ENCODE measurements at regions of chr11 and their contacts with region 1.

Region 1: DNA sequence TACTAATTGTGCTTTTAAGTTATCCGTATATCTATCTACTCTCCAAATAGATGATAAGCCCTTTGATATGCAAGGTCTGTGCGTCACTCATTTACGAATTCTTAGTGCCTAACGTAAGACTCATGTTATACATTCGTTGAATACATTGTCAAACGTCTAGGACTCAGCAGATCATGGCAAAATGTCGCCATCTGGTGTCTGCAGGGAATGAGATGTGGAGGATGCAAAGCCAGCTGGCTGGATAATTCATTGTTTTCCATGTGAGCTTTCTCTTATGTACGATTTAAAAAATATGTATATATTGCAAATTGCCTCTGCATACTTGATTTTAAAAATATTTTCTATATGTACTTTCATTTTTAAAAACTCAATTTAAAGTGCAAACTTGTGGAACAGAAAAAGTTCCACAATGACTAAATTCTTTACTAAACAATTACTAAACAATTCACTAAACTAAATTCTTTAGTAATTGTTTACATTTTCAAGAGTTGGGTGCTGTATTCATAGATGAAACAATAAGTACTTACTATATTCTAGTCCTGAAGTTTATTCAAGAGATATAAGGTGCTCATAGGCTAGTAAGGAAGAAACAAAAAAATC is 33.8 kb downstream of the ZNF202 start:
- DNase-seq: peak; percentile 70
- H3K4me3 Mint-ChIP-seq: no peak overlapping the region
- H3K27ac Mint-ChIP-seq: no peak overlapping the region
- H3K4me1 Mint-ChIP-seq: no peaks in the 10 kb centered on the region
- H3K27me3 Mint-ChIP-seq: peaks cover 4% of the 10 kb centered on the region

Region 2: DNA sequence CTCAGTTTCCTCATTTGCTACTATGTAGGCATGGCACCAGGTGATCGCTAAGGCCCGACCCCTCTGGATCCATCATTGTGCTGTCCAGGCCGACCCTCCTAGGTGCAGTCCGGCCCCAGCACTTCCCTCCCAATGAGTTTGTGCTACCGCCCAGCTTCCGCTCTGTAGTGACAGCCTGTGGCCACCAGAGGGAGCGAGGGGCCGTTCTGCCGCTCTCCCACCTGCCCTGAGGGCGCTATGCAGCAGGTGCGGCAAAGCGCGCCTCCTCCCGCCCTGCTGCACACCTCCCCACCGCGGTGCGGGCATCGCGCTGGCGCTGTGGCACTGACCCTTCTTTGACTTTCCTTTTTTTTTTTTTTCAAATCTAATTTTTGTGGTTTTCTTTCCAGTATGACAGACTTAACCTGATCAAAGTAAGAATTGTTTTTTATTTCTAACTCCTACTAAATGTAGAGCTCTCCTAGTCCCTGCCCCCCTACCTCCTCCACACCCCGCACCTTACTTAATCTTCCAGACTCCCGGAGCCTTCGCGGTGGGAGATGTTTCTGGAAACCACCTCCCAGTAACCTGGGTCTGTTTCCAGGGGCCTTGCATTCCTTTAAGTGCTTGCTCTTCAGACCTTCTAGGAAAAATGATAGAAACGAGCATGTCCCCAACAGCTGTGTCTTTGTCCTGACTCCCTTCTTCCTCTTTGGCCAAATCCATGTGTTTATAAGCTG is 127.0 kb before region 1 on chr11:
- CTCF ChIA-PET with region 1: interaction called, 20 read pairs
- POLR2A ChIA-PET with region 1: no interaction called
- intact Hi-C with region 1: loop called (anchors 1 kb)
- DNase-seq: peak; percentile 79
- H3K4me3 Mint-ChIP-seq: no peak overlapping the region
- H3K27ac Mint-ChIP-seq: no peak overlapping the region
- H3K4me1 Mint-ChIP-seq: peaks cover 12% of the 10 kb centered on the region
- H3K27me3 Mint-ChIP-seq: no peaks in the 10 kb centered on the region

Region 3: GRCh38 chr11:123640677-123641494 is 66.8 kb before region 1 on chr11:
- CTCF ChIA-PET with region 1: interaction called, 163 read pairs
- POLR2A ChIA-PET with region 1: no interaction called
- intact Hi-C with region 1: loop called (anchors 1 kb)
- DNase-seq: peak; percentile 66
- H3K4me3 Mint-ChIP-seq: no peak overlapping the region
- H3K27ac Mint-ChIP-seq: no peak overlapping the region
- H3K4me1 Mint-ChIP-seq: no peaks in the 10 kb centered on the region
- H3K27me3 Mint-ChIP-seq: peaks cover 17% of the 10 kb centered on the region

Region 4: DNA sequence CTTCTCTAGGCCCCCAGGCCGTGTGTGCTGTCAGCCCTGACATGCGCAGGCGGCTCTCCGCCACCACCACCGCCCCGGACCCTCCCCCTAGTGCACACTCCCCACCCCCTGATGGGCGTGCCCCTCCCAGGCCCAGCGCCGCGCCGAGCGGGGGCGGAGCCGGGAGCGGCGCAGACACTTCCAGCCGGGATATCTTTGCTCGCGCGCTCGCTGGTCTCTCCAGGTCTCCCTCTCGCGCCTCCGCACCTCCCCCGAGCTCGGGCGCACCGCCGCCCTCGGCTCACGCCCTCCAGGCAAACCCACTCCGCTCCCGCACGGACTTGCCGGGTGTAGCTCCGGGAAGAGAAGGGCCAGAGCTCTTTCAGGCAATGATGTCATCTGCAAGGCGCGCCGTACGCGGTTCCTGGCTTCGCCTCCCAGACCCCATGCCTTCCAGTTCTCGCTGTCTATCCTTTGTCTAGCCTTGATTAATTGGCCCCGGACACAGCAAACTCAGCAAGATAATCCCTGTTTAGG is 53.1 kb before region 1 on chr11 and contains the start of gene SCN3B:
- CTCF ChIA-PET with region 1: interaction called, 13 read pairs
- POLR2A ChIA-PET with region 1: no interaction called
- intact Hi-C with region 1: no loop called
- DNase-seq: peak; percentile 15
- H3K4me3 Mint-ChIP-seq: peak within 1 kb of the TSS; percentile 44
- H3K27ac Mint-ChIP-seq: no peak within 1 kb of the TSS
- H3K4me1 Mint-ChIP-seq: peaks cover 12% of the 10 kb centered on the region
- H3K27me3 Mint-ChIP-seq: peaks cover 35% of the 10 kb centered on the region
- total RNA-seq, gene SCN3B: not detected

Region 5: DNA sequence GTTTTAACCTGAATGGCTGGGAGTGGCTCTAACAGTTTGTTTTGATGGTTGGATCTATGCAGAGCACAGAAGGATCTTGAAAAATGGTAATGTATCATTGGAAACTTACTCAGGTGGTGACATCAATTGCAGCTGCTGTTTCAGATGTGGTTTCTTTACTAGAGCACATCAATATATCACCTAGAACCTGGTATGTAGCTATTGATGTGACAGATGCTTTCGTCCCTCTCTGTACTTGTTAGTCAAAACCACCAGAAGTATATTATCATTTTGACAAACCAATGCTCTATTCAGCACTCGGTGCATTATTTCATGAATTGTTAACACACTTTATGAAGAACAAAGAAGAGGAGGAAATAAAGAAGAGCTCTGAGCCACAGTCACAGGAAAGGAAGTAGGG is 26.7 kb before region 1 on chr11:
- CTCF ChIA-PET with region 1: interaction called, 10 read pairs
- POLR2A ChIA-PET with region 1: no interaction called
- intact Hi-C with region 1: no loop called
- DNase-seq: no peak
- H3K4me3 Mint-ChIP-seq: no peak overlapping the region
- H3K27ac Mint-ChIP-seq: peak overlapping the region; percentile 10
- H3K4me1 Mint-ChIP-seq: peaks cover 6% of the 10 kb centered on the region
- H3K27me3 Mint-ChIP-seq: peaks cover 6% of the 10 kb centered on the region

Region 6: DNA sequence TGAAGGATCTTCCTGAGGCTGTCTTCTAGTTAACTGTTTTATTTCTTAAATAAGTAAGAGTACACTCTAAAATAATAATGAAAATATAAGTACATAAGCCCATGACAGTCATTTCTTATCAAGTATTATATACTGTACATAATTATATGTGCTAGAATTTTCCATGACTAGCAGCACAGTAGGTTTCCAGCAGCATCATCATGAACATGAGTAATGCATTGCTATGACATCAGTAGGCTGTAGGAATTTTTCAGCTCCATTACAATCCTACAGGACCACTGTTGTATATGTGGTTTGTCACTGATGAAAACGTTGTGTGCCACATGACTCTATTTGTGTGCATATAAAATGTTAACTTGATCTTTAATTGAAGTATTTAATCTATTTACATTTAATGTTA is 11.7 kb after region 1 on chr11:
- CTCF ChIA-PET with region 1: interaction called, 28 read pairs
- POLR2A ChIA-PET with region 1: no interaction called
- intact Hi-C with region 1: no loop called
- DNase-seq: no peak
- H3K4me3 Mint-ChIP-seq: no peak overlapping the region
- H3K27ac Mint-ChIP-seq: no peak overlapping the region
- H3K4me1 Mint-ChIP-seq: peaks cover 6% of the 10 kb centered on the region
- H3K27me3 Mint-ChIP-seq: peaks cover 13% of the 10 kb centered on the region

Region 7: DNA sequence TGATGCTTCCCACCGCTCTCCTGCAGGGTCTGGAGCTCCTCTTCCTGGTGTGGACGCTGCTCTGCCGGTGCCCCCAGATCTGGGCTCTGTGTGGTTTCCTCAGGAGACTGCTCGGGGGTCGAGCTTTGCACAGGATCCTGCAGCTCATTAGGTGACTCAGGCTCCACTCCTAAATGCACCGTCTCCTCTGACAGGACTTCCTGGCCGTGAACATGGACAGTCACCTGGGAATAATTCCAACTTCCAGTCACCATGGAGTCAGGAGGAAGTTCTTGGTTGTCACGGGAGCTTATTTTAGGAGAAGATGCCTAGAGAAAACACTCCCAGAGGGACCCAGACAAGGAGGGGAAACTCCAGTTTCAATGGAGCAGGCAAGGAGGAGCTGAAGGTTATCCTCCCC is 21.9 kb after region 1 on chr11:
- CTCF ChIA-PET with region 1: interaction called, 16 read pairs
- POLR2A ChIA-PET with region 1: no interaction called
- intact Hi-C with region 1: no loop called
- DNase-seq: no peak
- H3K4me3 Mint-ChIP-seq: no peak overlapping the region
- H3K27ac Mint-ChIP-seq: no peak overlapping the region
- H3K4me1 Mint-ChIP-seq: no peaks in the 10 kb centered on the region
- H3K27me3 Mint-ChIP-seq: no peaks in the 10 kb centered on the region

Region 8: DNA sequence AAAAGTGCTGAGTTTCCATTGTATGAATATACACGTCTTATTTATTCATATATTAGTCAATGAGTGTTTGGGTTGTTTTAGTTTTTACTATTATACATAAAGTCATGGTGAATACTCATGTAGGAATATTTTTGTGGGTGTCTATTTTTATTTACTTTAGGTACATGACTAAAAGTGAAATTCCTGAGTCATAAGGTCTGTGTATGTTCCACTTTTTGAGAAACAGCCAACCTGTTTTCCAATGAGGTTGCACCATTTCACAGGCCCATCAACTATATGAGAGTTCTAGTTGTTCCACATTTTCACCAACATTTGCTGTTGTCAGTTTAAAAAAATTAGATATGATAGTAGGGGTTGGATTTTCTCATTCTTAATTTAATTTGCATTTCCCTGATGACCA is 53.2 kb after region 1 on chr11:
- CTCF ChIA-PET with region 1: no interaction called
- POLR2A ChIA-PET with region 1: no interaction called
- intact Hi-C with region 1: no loop called
- DNase-seq: no peak
- H3K4me3 Mint-ChIP-seq: no peak overlapping the region
- H3K27ac Mint-ChIP-seq: no peak overlapping the region
- H3K4me1 Mint-ChIP-seq: no peaks in the 10 kb centered on the region
- H3K27me3 Mint-ChIP-seq: peaks cover 8% of the 10 kb centered on the region